ENCODE measurements at regions of chr3 and their contacts with region 1.

Region 1: GRCh38 chr3:197730200-197730599 is 6.5 kb downstream of the RUBCN start:
- DNase-seq: no peak
- CTCF ChIP-seq: no peak

Region 2: DNA sequence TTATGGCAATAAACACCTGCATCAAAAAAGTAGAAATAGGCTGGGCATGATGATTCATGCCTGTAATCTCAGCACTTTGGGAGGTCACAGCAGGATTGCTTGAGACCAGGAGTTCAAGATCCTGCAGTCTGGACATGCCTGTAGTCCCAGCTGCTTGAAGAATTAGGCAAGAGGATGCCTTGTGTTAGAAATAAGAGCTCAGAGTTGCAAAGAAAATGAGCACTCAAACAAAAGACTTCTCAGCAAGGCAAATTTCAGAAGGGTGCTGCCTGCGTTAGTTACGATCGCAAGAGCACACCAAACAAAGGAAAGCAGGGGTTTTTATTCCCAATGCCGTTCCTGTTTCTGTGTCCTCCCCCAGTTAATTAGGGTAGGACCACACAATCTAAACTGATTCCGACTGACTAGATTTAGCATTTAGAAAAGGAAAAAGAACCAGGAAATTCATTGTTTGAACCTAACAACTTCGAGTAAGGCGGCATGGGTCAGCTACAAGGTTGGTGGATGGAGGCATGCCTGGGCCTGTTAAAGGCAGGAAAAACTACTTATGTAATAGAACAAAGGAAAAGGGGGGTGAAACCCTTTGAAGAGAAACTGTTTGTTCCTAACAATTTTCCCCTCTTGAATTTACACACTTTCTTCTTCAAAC is 487.3 kb before region 1 on chr3:
- CTCF ChIA-PET with region 1: no interaction called
- POLR2A ChIA-PET with region 1: no interaction called
- DNase-seq: no peak
- CTCF ChIP-seq: no peak

Region 3: DNA sequence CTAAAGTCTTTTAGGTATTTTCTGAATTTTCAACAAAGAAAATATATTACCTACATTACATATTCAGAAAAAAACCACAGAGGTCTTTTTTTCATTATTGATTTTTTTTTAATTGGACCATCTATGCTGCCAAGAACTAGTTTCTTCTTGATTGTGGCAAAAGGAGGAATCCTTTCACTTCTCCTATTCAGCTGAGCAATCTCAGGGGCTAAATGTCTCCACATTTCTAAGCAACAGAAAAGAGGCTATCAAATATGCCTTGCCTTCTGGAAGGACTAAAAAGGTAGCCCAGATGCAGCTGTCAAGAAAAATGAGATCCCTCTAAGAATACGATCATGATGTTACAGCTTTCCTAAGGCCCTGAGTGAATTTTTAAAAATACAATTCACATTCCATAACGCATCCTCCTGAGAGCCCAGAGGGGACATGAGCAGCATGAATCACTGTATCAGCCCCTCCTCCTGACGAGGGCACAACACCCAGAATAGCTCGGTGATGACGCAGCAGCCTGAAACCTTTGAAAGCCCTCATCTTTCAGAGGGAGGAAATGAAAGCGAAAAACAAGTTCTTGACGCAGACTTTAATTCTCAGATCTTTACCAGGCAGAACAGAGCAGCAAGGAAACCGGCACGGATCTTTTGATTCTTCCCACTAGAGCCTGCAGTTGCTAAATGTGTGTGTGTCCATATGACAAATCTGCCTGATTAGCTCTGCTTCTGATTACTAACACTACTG is 18.1 kb before region 1 on chr3:
- CTCF ChIA-PET with region 1: interaction called, 43 read pairs
- POLR2A ChIA-PET with region 1: interaction called, 8 read pairs
- DNase-seq: peak; percentile 79
- CTCF ChIP-seq: no peak

Region 4: GRCh38 chr3:197912770-197913476 is 182.7 kb after region 1 on chr3:
- CTCF ChIA-PET with region 1: no interaction called
- POLR2A ChIA-PET with region 1: no interaction called
- DNase-seq: no peak
- CTCF ChIP-seq: no peak

Region 5: GRCh38 chr3:197936819-197937384 is 206.7 kb after region 1 on chr3:
- CTCF ChIA-PET with region 1: no interaction called
- POLR2A ChIA-PET with region 1: no interaction called
- DNase-seq: no peak
- CTCF ChIP-seq: no peak

Measured in GM10248 (cell line).